Activated CD4-positive, alpha-beta T cell treated with anti-CD3 and anti-CD28 coated beads for 36 hours (primary cell): ENCODE measurements at regions of chr1 and their contacts with region 1.

Region 1: GRCh38 chr1:1615256-1616044 is at the start of gene MIB2:
- DNase-seq: peak; percentile 98
- ATAC-seq: peak; percentile 84
- H3K4me3 Mint-ChIP-seq: peak within 1 kb of the TSS; percentile 96
- H3K27ac Mint-ChIP-seq: peak within 1 kb of the TSS; percentile 95
- H3K4me1 Mint-ChIP-seq: peaks cover 24% of the 10 kb centered on the region
- H3K27me3 Mint-ChIP-seq: no peaks in the 10 kb centered on the region
- total RNA-seq, gene MIB2: 37.1 TPM

Region 2: DNA sequence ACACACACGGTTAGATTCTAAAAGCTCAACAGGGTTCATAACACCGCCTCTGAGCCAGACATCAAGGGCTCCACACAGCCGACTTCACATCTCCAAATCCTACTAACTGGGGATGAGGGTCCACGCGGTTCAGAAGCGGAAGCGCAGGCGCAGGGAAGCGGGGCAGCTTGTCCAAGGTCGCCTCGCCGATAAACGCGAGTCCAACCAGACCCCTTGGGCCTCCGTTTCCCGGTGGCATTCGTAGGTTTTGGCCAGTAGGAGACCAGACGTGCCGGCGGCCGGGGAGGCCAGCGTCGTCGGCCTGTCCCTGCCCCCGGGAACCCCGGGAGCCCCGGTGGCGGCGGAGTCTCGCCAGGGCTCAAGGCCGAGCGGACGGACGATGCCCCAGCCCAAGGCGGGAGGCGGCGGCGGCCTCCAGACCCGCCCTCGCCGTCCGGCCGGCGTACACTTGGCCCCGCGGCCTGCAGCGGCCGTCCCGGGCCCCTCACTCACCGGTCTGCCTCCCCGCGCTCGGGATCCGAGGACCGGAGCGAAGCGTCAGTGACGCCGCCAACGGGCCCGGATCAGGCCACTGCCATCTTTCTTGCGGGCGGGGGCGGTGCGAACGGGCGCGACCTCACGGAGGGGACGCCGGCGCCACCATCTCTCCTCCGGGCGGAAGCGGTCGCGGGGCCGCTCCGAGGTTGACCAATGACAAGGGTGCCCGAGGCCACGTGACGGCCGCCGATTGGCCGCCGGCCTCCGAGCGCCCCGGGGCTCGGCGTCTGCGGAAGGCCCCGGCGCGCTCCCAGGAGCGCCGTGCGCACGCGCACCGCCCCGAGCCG is 383.8 kb before region 1 on chr1 and contains the start of gene SDF4:
- CTCF ChIA-PET with region 1: no interaction called
- POLR2A ChIA-PET with region 1: no interaction called
- intact Hi-C with region 1: loop called in 1 of 2 experiments (anchors 1 kb)
- DNase-seq: peak; percentile 98
- ATAC-seq: peak; percentile 98
- H3K4me3 Mint-ChIP-seq: peak within 1 kb of the TSS; percentile 94
- H3K27ac Mint-ChIP-seq: peak within 1 kb of the TSS; percentile 91
- H3K4me1 Mint-ChIP-seq: peaks cover 35% of the 10 kb centered on the region
- H3K27me3 Mint-ChIP-seq: no peaks in the 10 kb centered on the region
- total RNA-seq, gene SDF4: 108 to 128 TPM

Region 3: GRCh38 chr1:1349256-1350012 is 266.0 kb before region 1 on chr1 and contains the start of gene DVL1:
- CTCF ChIA-PET with region 1: no interaction called
- POLR2A ChIA-PET with region 1: no interaction called
- intact Hi-C with region 1: loop called in 1 of 2 experiments (anchors 1 kb)
- DNase-seq: peak; percentile 81
- ATAC-seq: peak; percentile 71
- H3K4me3 Mint-ChIP-seq: peak within 1 kb of the TSS; percentile 74
- H3K27ac Mint-ChIP-seq: no peak within 1 kb of the TSS
- H3K4me1 Mint-ChIP-seq: peaks cover 25% of the 10 kb centered on the region
- H3K27me3 Mint-ChIP-seq: peaks cover 11% of the 10 kb centered on the region
- total RNA-seq, gene DVL1: 35.3 to 35.5 TPM

Region 4: DNA sequence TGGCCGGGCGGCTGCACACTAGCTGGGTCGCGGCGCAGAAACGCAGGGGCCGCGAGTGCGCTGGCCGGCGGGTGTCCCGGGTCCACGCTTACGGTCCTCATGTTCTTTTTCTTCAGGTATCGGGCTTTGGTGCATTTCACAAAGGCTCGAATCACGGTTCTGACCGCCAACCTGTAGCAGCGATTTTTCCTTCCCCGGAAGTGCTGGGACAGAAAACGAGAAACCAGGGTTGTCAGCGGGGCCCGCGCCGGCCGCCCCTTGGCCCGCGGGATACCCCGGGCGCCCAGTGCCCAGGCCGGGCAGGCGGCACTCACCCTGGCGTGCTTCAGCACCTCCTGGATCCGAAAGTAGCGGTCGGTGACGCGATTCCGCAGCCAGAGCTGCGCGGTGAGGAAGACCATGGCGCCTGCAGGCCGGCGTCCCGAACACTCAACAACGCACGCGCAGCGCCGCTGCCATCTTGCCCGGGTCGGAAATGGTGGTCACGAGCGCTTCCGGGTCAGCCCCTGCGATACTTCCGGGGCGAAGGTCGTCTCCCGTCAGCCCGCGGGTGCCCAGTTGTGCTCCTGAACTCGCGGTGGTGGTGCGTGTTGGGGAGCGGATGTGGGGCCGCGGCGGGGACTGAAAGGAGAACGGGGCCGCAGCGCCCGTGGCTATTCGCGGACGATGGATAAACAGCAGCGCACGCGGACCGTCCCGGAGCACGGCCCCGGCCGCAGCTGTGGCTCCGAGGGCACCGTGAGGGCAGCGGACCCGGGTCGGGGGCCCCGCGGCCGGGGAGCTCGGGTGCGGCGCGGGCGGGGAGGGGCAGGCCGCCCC is 208.4 kb before region 1 on chr1 and contains the start of gene MRPL20:
- CTCF ChIA-PET with region 1: no interaction called
- POLR2A ChIA-PET with region 1: no interaction called
- intact Hi-C with region 1: loop called in 1 of 2 experiments (anchors 1 kb)
- DNase-seq: peak; percentile 98
- ATAC-seq: peak; percentile 95
- H3K4me3 Mint-ChIP-seq: peak within 1 kb of the TSS; percentile 92
- H3K27ac Mint-ChIP-seq: peak within 1 kb of the TSS; percentile 91
- H3K4me1 Mint-ChIP-seq: peaks cover 41% of the 10 kb centered on the region
- H3K27me3 Mint-ChIP-seq: no peaks in the 10 kb centered on the region
- total RNA-seq, gene MRPL20: 126 to 143 TPM

Region 5: DNA sequence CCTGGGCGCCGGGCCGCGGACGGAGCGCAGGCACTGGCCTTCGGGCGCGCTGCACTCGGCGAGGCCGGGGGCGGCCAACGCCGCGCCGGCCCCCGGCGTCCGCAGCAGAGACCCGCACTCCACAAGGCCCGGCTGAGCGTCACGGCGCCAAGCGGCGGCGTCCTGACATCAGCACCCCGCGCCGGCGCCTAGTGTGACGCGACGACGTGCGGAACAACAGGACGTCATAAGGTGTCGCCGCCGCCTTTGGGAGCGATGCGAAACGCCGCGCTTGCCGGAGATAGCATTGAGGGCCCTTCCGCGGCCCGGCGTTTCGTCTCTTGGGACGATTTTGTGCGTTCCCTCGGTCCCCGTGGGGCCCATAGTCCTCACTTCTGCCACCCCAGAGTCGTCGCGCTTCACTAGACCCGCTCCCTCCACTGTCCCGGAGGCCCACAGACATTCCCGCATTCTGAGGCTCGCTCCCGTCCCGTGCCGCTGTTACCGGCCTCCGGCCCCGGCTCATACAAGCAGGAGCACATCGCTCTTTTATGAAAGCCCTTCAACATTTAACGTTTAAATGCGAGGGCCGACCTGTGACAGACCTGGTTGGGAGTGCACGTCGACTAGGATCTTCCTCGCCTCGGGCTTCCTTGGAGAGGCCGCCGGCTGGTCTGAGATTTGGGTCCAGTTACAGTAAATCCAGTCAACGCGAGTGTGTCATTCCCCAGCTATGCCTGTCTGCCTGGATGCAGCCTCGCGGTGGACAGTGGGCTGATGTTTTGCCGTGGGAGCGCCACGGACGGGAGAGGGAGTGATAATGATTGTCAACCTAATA is 40.5 kb before region 1 on chr1 and contains the start of gene SSU72:
- CTCF ChIA-PET with region 1: interaction called, 4 read pairs
- POLR2A ChIA-PET with region 1: interaction called, 4 read pairs
- intact Hi-C with region 1: loop called (anchors 1 kb)
- DNase-seq: peak; percentile 97
- ATAC-seq: peak; percentile 84
- H3K4me3 Mint-ChIP-seq: peak within 1 kb of the TSS; percentile 99
- H3K27ac Mint-ChIP-seq: peak within 1 kb of the TSS; percentile 98
- H3K4me1 Mint-ChIP-seq: peaks cover 28% of the 10 kb centered on the region
- H3K27me3 Mint-ChIP-seq: no peaks in the 10 kb centered on the region
- total RNA-seq, gene SSU72: 105 to 123 TPM

Region 6: DNA sequence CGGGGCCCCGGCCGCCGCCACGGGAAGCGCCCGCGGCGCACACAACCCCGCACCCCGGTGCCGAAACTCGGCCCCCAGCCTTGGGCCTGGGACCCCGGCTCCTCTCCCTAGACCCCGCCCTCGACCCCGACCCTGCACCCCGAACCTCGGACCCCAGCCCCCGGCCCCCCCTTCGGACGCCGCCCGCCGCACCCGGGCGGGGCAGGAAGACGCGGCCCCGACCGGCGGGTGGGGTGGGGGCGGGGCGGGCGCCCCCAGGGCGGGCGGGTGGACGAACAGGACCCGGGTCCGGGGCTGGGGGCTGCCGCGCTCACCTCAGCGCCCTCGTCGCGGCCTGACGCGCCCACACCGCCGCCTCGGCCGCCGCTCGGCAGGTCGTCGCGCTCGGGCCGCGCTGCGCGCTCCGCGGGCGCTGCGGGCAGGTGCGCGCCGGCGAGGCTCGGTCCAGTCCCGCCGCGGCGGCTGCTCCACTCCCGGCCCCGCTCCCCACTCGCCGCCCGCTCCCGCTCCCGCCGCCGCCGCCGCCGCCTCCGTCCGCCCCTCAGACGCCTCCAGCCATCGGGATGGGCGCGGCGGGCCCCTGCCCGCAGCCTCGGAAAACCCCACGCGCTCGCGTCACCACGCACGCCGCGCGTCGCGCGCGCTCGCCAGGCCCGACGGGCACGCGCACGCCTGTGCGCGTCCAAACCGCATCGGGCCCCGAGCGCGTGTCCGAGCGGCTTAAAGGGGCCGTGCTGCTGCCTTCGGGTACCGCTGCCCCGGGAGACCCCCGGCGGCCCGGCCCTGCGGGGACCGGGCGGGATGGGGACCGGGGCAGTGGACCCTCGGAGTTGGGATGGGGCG is 275.3 kb after region 1 on chr1 and contains the start of gene GNB1:
- CTCF ChIA-PET with region 1: no interaction called
- POLR2A ChIA-PET with region 1: no interaction called
- intact Hi-C with region 1: loop called in 1 of 2 experiments (anchors 1 kb)
- DNase-seq: peak; percentile 91
- ATAC-seq: peak; percentile 47
- H3K4me3 Mint-ChIP-seq: peak within 1 kb of the TSS; percentile 88
- H3K27ac Mint-ChIP-seq: peak within 1 kb of the TSS; percentile 84
- H3K4me1 Mint-ChIP-seq: peaks cover 54% of the 10 kb centered on the region
- H3K27me3 Mint-ChIP-seq: no peaks in the 10 kb centered on the region
- total RNA-seq, gene GNB1: 347 to 669 TPM

Region 7: GRCh38 chr1:2412519-2413233 is 797.2 kb after region 1 on chr1 and contains the start of gene PEX10:
- CTCF ChIA-PET with region 1: no interaction called
- POLR2A ChIA-PET with region 1: no interaction called
- intact Hi-C with region 1: loop called in 1 of 2 experiments (anchors 2 kb)
- DNase-seq: peak; percentile 100
- ATAC-seq: peak; percentile 89
- H3K4me3 Mint-ChIP-seq: peak within 1 kb of the TSS; percentile 83
- H3K27ac Mint-ChIP-seq: peak within 1 kb of the TSS; percentile 85
- H3K4me1 Mint-ChIP-seq: peaks cover 38% of the 10 kb centered on the region
- H3K27me3 Mint-ChIP-seq: no peaks in the 10 kb centered on the region
- total RNA-seq, gene PEX10: 15.1 to 17.7 TPM